Panc1 (cell line): ENCODE measurements at regions of chr9 and their contacts with region 1.

Region 1: GRCh38 chr9:35553670-35554543 is 51.2 kb upstream of the TESK1 start:
- DNase-seq: peak; percentile 51
- ATAC-seq: peak; percentile 89
- H3K4me3 ChIP-seq: no peak overlapping the region
- H3K27ac ChIP-seq: peak overlapping the region; percentile 82
- H3K4me1 ChIP-seq: peaks cover 21% of the 10 kb centered on the region
- H3K27me3 ChIP-seq: no peaks in the 10 kb centered on the region
- CTCF ChIP-seq: no peak

Region 2: DNA sequence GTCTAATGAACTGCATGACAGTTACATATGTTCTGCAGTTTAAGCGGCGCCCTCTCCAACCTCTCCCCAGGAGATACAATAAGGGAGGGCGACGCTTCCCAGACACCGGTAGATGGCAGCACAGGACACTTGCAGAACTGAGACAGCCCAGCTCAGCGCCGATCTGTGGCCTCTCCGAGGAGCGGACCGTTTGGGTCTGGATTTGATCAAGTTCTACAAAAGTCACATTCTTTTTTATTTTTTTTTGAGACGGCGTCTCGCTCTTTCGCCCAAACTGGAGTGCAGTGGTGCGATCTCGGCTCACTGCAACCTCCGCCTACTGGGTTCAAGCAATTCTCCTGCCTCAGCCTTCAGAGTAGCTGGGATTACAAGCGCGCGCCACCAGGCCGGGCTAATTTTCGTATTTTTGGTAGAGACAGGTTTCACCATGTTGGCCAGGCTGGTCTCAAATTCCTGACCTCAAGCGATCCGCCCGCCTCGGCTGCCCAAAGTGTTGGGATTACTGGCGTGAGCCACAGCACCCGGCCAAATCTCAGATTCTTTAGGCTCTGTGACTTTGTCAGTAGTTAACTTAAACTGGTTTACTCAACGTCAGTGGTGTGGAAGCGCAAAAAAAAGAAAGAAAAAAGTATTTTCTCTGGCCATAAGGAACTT is 436.9 kb before region 1 on chr9:
- CTCF ChIA-PET with region 1: interaction called, 4 read pairs
- POLR2A ChIA-PET with region 1: no interaction called
- in situ Hi-C with region 1: no loop called
- intact Hi-C with region 1: loop called (anchors 5 kb)
- DNase-seq: peak; percentile 82
- ATAC-seq: peak; percentile 83
- H3K4me3 ChIP-seq: peak overlapping the region; percentile 70 to 97
- H3K27ac ChIP-seq: peak overlapping the region; percentile 52
- H3K4me1 ChIP-seq: peaks cover 21% of the 10 kb centered on the region
- H3K27me3 ChIP-seq: no peaks in the 10 kb centered on the region
- CTCF ChIP-seq: no peak

Region 3: DNA sequence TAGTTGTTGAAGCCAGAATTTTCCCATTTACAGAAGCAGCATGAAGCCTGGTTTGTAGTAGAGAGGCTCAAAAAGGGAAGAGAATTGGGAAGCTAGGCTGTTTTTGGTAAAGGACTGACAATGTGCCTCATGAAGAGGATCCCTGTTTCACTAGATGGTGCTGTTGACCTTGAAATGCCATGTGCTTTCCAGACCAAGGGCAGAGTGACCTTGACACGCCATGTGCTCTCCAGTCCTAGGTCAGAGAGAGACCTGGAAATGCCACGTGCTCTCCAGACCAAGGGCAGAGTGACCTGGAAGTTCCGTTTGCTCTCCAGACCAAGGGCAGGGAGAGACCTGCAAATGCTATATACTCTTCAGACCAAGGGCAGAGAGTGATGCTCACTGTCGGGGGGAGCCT is 360.1 kb before region 1 on chr9:
- CTCF ChIA-PET with region 1: no interaction called
- POLR2A ChIA-PET with region 1: no interaction called
- in situ Hi-C with region 1: no loop called
- intact Hi-C with region 1: loop called (anchors 10 kb)
- DNase-seq: no peak
- ATAC-seq: 0 out of 2 replicates have a peak, but pooled peaks have one; percentile 73
- H3K4me3 ChIP-seq: no peak overlapping the region
- H3K27ac ChIP-seq: no peak overlapping the region
- H3K4me1 ChIP-seq: no peaks in the 10 kb centered on the region
- H3K27me3 ChIP-seq: no peaks in the 10 kb centered on the region
- CTCF ChIP-seq: peak; percentile 37

Region 4: DNA sequence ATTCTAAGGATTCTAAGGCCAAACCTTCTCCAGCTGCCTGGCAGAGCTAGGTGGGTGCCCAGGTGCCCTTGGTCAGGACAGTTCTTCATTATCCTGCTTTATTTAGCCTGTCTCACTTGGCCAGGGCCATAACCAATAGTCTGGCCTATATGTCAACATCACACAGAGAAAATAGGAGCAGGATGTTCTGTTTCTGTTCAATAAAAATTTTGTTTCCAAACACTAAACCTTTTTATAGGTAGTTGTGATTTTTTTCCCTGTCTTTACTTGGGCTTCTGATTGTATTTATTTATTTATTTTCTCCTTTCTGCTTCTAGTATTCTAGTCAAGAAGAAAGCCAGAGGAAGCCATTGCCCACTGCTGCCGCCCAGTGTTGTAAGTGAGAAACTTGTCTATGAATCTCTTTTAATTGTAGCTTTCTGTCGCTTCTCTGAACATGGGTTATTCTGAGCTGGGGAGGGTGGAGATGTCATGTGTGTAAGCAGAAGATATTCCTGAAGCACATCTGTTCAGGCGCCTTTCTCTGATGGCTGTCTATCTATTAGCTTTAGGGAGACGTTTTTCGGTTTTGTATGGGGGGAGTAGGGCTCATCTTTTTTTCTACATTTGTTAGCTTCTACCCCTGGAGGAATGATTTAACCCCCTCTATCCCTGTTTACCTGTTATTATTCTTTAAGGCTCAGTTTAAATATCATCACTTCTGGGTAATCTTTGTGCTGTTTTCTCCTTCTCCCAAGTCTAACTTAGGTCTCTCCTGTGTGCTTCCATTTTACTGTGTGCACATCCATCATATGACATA is 295.0 kb before region 1 on chr9:
- CTCF ChIA-PET with region 1: no interaction called
- POLR2A ChIA-PET with region 1: no interaction called
- in situ Hi-C with region 1: no loop called
- intact Hi-C with region 1: loop called (anchors 5 kb)
- DNase-seq: peak; percentile 43
- ATAC-seq: peak; percentile 95
- H3K4me3 ChIP-seq: no peak overlapping the region
- H3K27ac ChIP-seq: no peak overlapping the region
- H3K4me1 ChIP-seq: no peaks in the 10 kb centered on the region
- H3K27me3 ChIP-seq: no peaks in the 10 kb centered on the region
- CTCF ChIP-seq: peak; percentile 92

Region 5: GRCh38 chr9:35481347-35481975 is 72.4 kb before region 1 on chr9:
- CTCF ChIA-PET with region 1: interaction called, 10 read pairs
- POLR2A ChIA-PET with region 1: no interaction called
- in situ Hi-C with region 1: no loop called
- intact Hi-C with region 1: loop called (anchors 1 kb)
- DNase-seq: peak; percentile 43
- ATAC-seq: peak; percentile 83
- H3K4me3 ChIP-seq: no peak overlapping the region
- H3K27ac ChIP-seq: peak overlapping the region; percentile 74
- H3K4me1 ChIP-seq: peaks cover 8% of the 10 kb centered on the region
- H3K27me3 ChIP-seq: no peaks in the 10 kb centered on the region
- CTCF ChIP-seq: peak; percentile 94

Region 6: GRCh38 chr9:35489313-35490154 is 64.4 kb before region 1 on chr9 and contains the start of gene RUSC2:
- CTCF ChIA-PET with region 1: interaction called, 16 read pairs
- POLR2A ChIA-PET with region 1: interaction called, 3 read pairs
- in situ Hi-C with region 1: no loop called
- intact Hi-C with region 1: no loop called
- DNase-seq: peak; percentile 67
- ATAC-seq: peak; percentile 80
- H3K4me3 ChIP-seq: peak within 1 kb of the TSS; percentile 73 to 85
- H3K27ac ChIP-seq: peak within 1 kb of the TSS; percentile 99
- H3K4me1 ChIP-seq: peaks cover 25% of the 10 kb centered on the region
- H3K27me3 ChIP-seq: no peaks in the 10 kb centered on the region
- CTCF ChIP-seq: peak; percentile 72
- total RNA-seq, gene RUSC2: 49.9 TPM

Region 7: DNA sequence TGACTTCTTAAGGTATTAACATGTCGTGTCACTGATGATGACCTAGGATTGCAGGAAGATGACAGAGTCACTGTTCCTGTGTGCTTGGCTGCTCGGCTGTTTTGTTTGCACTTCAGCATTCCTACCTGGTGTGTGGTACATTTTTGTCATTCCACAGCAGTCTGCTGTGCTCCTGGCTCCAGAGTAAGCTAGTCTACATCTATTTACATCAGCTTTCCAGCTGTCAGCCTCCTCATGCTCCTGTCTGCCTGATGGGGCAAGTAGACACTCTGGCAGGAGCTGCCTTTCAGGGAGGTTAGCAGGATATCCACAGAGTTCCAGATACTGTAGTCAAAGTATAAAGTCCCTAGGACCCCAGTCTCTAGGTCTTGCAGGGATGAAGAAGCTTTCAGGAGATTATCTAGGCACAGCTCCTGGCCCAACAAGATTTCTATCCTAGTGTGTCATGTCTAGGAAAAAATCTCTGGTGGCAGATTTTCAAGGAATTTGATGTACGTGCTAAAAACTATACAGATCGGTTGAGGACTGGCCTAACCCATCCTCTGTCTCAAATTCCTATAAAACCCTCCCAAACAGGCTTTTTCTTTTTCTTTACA is 35.6 kb before region 1 on chr9:
- CTCF ChIA-PET with region 1: interaction called, 9 read pairs
- POLR2A ChIA-PET with region 1: no interaction called
- in situ Hi-C with region 1: no loop called
- intact Hi-C with region 1: loop called (anchors 5 kb)
- DNase-seq: peak; percentile 98
- ATAC-seq: peak; percentile 96
- H3K4me3 ChIP-seq: peak overlapping the region in 1 of 2 experiments; percentile 15; a peak in 1 of 4 replicates
- H3K27ac ChIP-seq: peak overlapping the region; percentile 100
- H3K4me1 ChIP-seq: peaks cover 98% of the 10 kb centered on the region
- H3K27me3 ChIP-seq: no peaks in the 10 kb centered on the region
- CTCF ChIP-seq: no peak

Region 8: DNA sequence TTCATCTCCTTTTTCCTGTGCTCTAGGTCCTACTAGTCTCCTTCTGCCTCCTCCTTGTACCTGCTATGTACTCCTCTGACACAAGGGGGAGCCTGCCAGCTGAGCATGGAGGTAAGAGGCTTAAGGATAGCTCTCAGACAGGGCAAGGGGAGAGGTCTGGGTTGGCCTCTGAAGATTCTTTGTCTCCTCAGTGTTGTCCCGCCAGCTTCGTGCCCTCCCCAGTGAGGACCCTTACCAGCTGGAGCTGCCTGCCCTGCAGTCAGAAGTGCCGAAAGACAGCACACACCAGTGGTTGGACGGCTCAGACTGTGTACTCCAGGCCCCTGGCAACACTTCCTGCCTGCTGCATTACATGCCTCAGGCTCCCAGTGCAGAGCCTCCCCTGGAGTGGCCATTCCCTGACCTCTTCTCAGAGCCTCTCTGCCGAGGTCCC is 182.3 kb after region 1 on chr9:
- CTCF ChIA-PET with region 1: no interaction called
- POLR2A ChIA-PET with region 1: no interaction called
- in situ Hi-C with region 1: no loop called
- intact Hi-C with region 1: no loop called
- DNase-seq: no peak
- ATAC-seq: peak; percentile 49
- H3K4me3 ChIP-seq: no peak overlapping the region
- H3K27ac ChIP-seq: peak overlapping the region; percentile 51
- H3K4me1 ChIP-seq: peaks cover 24% of the 10 kb centered on the region
- H3K27me3 ChIP-seq: no peaks in the 10 kb centered on the region
- CTCF ChIP-seq: no peak

Region 9: GRCh38 chr9:36053971-36054370 is 500.1 kb after region 1 on chr9:
- CTCF ChIA-PET with region 1: no interaction called
- POLR2A ChIA-PET with region 1: no interaction called
- in situ Hi-C with region 1: no loop called
- intact Hi-C with region 1: no loop called
- DNase-seq: no peak
- ATAC-seq: peak; percentile 51; the same call in 1 of the 2 replicates
- H3K4me3 ChIP-seq: no peak overlapping the region
- H3K27ac ChIP-seq: no peak overlapping the region
- H3K4me1 ChIP-seq: no peaks in the 10 kb centered on the region
- H3K27me3 ChIP-seq: no peaks in the 10 kb centered on the region
- CTCF ChIP-seq: no peak